ENCODE measurements at regions of chr17 and their contacts with region 1.

Region 1: GRCh38 chr17:40098846-40099618 is 1.4 kb downstream of the NR1D1 start:
- DNase-seq: peak; percentile 100
- ATAC-seq: peak; percentile 90
- H3K4me3 ChIP-seq: peak overlapping the region; percentile 43 to 76
- H3K27ac ChIP-seq: peak overlapping the region; percentile 87 to 92
- H3K4me1 ChIP-seq: no peaks in the 10 kb centered on the region
- H3K27me3 ChIP-seq: no peaks in the 10 kb centered on the region

Region 2: GRCh38 chr17:40177275-40177874 is 78.3 kb after region 1 on chr17 and contains the start of gene RAPGEFL1:
- intact Hi-C with region 1: no loop called
- DNase-seq: peak; percentile 86 to 94
- ATAC-seq: peak; percentile 83
- H3K4me3 ChIP-seq: peak within 1 kb of the TSS; percentile 25 to 28
- H3K27ac ChIP-seq: no peak within 1 kb of the TSS
- H3K4me1 ChIP-seq: no peaks in the 10 kb centered on the region
- H3K27me3 ChIP-seq: no peaks in the 10 kb centered on the region
- total RNA-seq, gene RAPGEFL1: 13.9 to 16.6 TPM

Region 3: GRCh38 chr17:40331743-40332641 is 233.0 kb after region 1 on chr17:
- intact Hi-C with region 1: loop called in 1 of 2 experiments (anchors 10 kb)
- DNase-seq: peak; percentile 93 to 96
- ATAC-seq: peak; percentile 94
- H3K4me3 ChIP-seq: no peak overlapping the region
- H3K27ac ChIP-seq: peak overlapping the region in 1 of 2 donors; percentile 86
- H3K4me1 ChIP-seq: peaks cover 0 to 7% of the 10 kb centered on the region in 2 donors
- H3K27me3 ChIP-seq: no peaks in the 10 kb centered on the region

Measured in aorta (tissue), 5 donors.